CD8-positive, alpha-beta T cell (primary cell): ENCODE measurements at regions of chr5 and their contacts with region 1.

Region 1: DNA sequence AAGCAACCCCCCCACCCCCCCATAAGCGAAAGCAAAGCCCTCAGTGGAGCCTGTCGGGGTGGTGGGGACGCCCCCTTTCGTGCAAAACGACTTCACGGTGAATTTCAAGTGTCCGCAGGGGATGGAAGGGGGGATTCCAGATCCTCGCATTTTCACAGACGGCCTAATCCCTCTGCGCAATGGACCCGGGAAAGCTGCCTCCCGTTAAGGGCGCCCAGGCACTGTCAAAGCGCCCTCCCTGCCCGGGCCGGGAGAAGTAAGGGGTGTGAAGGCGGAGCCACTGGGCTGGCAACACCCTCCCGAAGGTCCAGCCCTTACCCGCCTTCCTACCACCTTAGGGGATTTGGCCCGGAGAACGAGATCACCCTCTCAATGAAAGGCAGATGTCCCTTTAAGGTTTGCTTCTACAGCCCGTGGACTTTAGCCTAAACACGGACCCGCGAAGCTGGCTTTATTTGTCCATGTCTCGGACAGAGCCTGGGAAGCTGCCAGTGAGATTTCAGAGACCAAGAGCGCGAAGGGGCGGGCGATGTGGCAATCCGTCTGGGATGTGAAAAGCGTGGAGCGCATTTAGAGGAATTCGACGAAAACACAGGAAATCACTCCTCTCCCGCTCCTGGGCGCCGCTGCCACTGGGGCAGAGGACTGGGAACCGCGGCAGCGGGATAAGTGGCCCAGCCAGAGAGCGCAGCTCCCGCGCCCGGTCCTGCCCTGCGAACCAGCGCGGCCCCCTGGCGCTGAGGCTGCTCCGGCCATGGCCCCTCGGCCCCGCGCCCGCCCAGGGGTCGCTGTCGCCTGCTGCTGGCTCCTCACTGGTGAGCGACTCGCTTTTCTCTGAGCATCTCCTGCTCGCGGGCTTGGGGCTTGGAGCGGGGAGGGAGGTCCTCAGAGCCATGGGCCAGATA is at the starts of genes ITGA1 and PELO:
- DNase-seq: peak in 8 of 9 experiments; percentile 21 to 81 (median 60)
- ATAC-seq: peak; percentile 79
- H3K4me3 ChIP-seq: peak within 1 kb of the TSS; percentile 69 to 83
- H3K4me3 Mint-ChIP-seq: peak within 1 kb of the TSS; percentile 94
- H3K27ac ChIP-seq: peak within 1 kb of the TSS in 1 of 2 experiments; percentile 35
- H3K27ac Mint-ChIP-seq: peak within 1 kb of the TSS; percentile 87
- H3K4me1 ChIP-seq: peaks cover 8% of the 10 kb centered on the region
- H3K4me1 Mint-ChIP-seq: peaks cover 39% of the 10 kb centered on the region
- H3K27me3 ChIP-seq: peaks cover 0 to 4% of the 10 kb centered on the region in 2 experiments
- H3K27me3 Mint-ChIP-seq: no peaks in the 10 kb centered on the region
- CTCF ChIP-seq: peak; percentile 36
- total RNA-seq, gene ITGA1: 4.6 to 7.3 TPM
- total RNA-seq, gene PELO: 13.4 to 13.7 TPM

Region 2: GRCh38 chr5:52638732-52639131 is 149.1 kb before region 1 on chr5:
- CTCF ChIA-PET with region 1: no interaction called
- POLR2A ChIA-PET with region 1: no interaction called
- intact Hi-C with region 1: no loop called
- DNase-seq: no peak
- ATAC-seq: no peak
- H3K4me3 ChIP-seq: no peak overlapping the region
- H3K4me3 Mint-ChIP-seq: no peak overlapping the region
- H3K27ac ChIP-seq: no peak overlapping the region
- H3K27ac Mint-ChIP-seq: no peak overlapping the region
- H3K4me1 ChIP-seq: no peaks in the 10 kb centered on the region
- H3K4me1 Mint-ChIP-seq: no peaks in the 10 kb centered on the region
- H3K27me3 ChIP-seq: no peaks in the 10 kb centered on the region
- H3K27me3 Mint-ChIP-seq: peaks cover 9% of the 10 kb centered on the region
- CTCF ChIP-seq: no peak

Region 3: GRCh38 chr5:52725065-52725746 is 62.6 kb before region 1 on chr5:
- CTCF ChIA-PET with region 1: interaction called, 8 read pairs
- POLR2A ChIA-PET with region 1: interaction called, 5 read pairs
- intact Hi-C with region 1: loop called (anchors 1 to 5 kb)
- DNase-seq: peak; percentile 45 to 92 (median 67)
- ATAC-seq: peak; percentile 95
- H3K4me3 ChIP-seq: no peak overlapping the region
- H3K4me3 Mint-ChIP-seq: peak overlapping the region; percentile 68
- H3K27ac ChIP-seq: peak overlapping the region; percentile 44 to 67
- H3K27ac Mint-ChIP-seq: peak overlapping the region; percentile 95
- H3K4me1 ChIP-seq: peaks cover 35% of the 10 kb centered on the region
- H3K4me1 Mint-ChIP-seq: peaks cover 71% of the 10 kb centered on the region
- H3K27me3 ChIP-seq: no peaks in the 10 kb centered on the region
- H3K27me3 Mint-ChIP-seq: no peaks in the 10 kb centered on the region
- CTCF ChIP-seq: no peak

Region 4: GRCh38 chr5:52743970-52744369 is 43.9 kb before region 1 on chr5:
- CTCF ChIA-PET with region 1: interaction called, 6 read pairs
- POLR2A ChIA-PET with region 1: no interaction called
- intact Hi-C with region 1: loop called in 1 of 2 experiments (anchors 1 kb)
- DNase-seq: peak in 8 of 9 experiments; percentile 22 to 74 (median 53)
- ATAC-seq: peak; percentile 91
- H3K4me3 ChIP-seq: no peak overlapping the region
- H3K4me3 Mint-ChIP-seq: peak overlapping the region; percentile 9
- H3K27ac ChIP-seq: peak overlapping the region in 1 of 2 experiments; percentile 21
- H3K27ac Mint-ChIP-seq: peak overlapping the region; percentile 90
- H3K4me1 ChIP-seq: peaks cover 43% of the 10 kb centered on the region
- H3K4me1 Mint-ChIP-seq: peaks cover 73% of the 10 kb centered on the region
- H3K27me3 ChIP-seq: no peaks in the 10 kb centered on the region
- H3K27me3 Mint-ChIP-seq: no peaks in the 10 kb centered on the region
- CTCF ChIP-seq: no peak

Region 5: DNA sequence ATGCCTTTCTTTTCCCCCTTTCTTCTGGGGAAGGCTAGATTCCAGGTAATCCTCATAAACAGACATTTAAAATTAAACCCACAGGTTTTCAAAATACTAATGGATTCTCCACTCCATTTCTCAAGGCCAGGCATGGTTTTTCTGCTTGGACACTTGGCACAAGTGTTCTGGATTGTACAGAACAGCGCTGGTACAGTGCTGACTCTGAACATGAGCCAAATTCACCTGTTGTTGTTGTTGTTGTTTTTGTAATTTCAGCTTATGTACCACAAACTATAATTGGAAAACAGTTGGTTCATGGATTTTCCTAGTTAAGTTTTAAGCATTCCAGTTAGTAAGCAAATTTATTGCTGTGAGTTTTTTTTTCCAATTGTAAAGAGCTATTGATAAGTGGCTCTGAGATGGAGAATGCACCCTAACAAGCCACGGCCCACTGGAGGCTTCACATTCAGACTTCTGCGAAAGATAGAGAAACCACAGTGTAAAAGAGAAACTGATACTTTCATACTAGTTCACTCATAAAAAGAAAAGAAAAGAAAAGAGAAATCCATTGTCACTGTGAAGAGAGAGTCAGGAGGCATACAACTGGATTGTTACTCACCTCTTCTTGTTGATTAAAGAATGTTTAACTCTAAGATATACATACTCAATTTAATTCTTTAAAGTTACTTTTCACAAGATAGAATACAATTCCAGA is 16.4 kb before region 1 on chr5:
- CTCF ChIA-PET with region 1: interaction called, 26 read pairs
- POLR2A ChIA-PET with region 1: interaction called, 4 read pairs
- intact Hi-C with region 1: loop called in 1 of 2 experiments (anchors 1 kb)
- DNase-seq: peak in 5 of 9 experiments; percentile 6 to 57 (median 26)
- ATAC-seq: peak; percentile 45
- H3K4me3 ChIP-seq: no peak overlapping the region
- H3K4me3 Mint-ChIP-seq: peak overlapping the region; percentile 63
- H3K27ac ChIP-seq: no peak overlapping the region
- H3K27ac Mint-ChIP-seq: peak overlapping the region; percentile 87
- H3K4me1 ChIP-seq: peaks cover 24% of the 10 kb centered on the region
- H3K4me1 Mint-ChIP-seq: peaks cover 59% of the 10 kb centered on the region
- H3K27me3 ChIP-seq: no peaks in the 10 kb centered on the region
- H3K27me3 Mint-ChIP-seq: no peaks in the 10 kb centered on the region
- CTCF ChIP-seq: no peak

Region 6: GRCh38 chr5:52915176-52915875 is 127.5 kb after region 1 on chr5:
- CTCF ChIA-PET with region 1: interaction called, 6 read pairs
- POLR2A ChIA-PET with region 1: no interaction called
- intact Hi-C with region 1: loop called (anchors 1 kb)
- DNase-seq: peak; percentile 10 to 76 (median 45)
- ATAC-seq: peak; percentile 97
- H3K4me3 ChIP-seq: no peak overlapping the region
- H3K4me3 Mint-ChIP-seq: peak overlapping the region; percentile 50
- H3K27ac ChIP-seq: no peak overlapping the region
- H3K27ac Mint-ChIP-seq: no peak overlapping the region
- H3K4me1 ChIP-seq: no peaks in the 10 kb centered on the region
- H3K4me1 Mint-ChIP-seq: peaks cover 6% of the 10 kb centered on the region
- H3K27me3 ChIP-seq: no peaks in the 10 kb centered on the region
- H3K27me3 Mint-ChIP-seq: no peaks in the 10 kb centered on the region
- CTCF ChIP-seq: peak; percentile 88

Region 7: GRCh38 chr5:53095931-53096525 is 308.2 kb after region 1 on chr5:
- CTCF ChIA-PET with region 1: interaction called, 3 read pairs
- POLR2A ChIA-PET with region 1: no interaction called
- intact Hi-C with region 1: loop called (anchors 1 to 5 kb)
- DNase-seq: peak; percentile 43 to 76 (median 68)
- ATAC-seq: peak; percentile 93
- H3K4me3 ChIP-seq: no peak overlapping the region
- H3K4me3 Mint-ChIP-seq: no peak overlapping the region
- H3K27ac ChIP-seq: no peak overlapping the region
- H3K27ac Mint-ChIP-seq: no peak overlapping the region
- H3K4me1 ChIP-seq: no peaks in the 10 kb centered on the region
- H3K4me1 Mint-ChIP-seq: no peaks in the 10 kb centered on the region
- H3K27me3 ChIP-seq: no peaks in the 10 kb centered on the region
- H3K27me3 Mint-ChIP-seq: no peaks in the 10 kb centered on the region
- CTCF ChIP-seq: peak; percentile 81